Gastrocnemius medialis (tissue), 4 donors: ENCODE measurements at regions of chr12 and their contacts with region 1.

Region 1: GRCh38 chr12:102347811-102348210 is 132.6 kb downstream of the IGF1 start:
- DNase-seq: no peak
- ATAC-seq: no peak
- H3K4me3 ChIP-seq: peak overlapping the region in 1 of 4 donors; percentile 35
- H3K27ac ChIP-seq: peak overlapping the region in 3 of 4 donors; percentile 69 to 83 (median 80)
- H3K4me1 ChIP-seq: peaks cover 40 to 47% of the 10 kb centered on the region in 2 donors
- H3K27me3 ChIP-seq: no peaks in the 10 kb centered on the region
- CTCF ChIP-seq: no peak
- POLR2A ChIP-seq: no peak

Region 2: DNA sequence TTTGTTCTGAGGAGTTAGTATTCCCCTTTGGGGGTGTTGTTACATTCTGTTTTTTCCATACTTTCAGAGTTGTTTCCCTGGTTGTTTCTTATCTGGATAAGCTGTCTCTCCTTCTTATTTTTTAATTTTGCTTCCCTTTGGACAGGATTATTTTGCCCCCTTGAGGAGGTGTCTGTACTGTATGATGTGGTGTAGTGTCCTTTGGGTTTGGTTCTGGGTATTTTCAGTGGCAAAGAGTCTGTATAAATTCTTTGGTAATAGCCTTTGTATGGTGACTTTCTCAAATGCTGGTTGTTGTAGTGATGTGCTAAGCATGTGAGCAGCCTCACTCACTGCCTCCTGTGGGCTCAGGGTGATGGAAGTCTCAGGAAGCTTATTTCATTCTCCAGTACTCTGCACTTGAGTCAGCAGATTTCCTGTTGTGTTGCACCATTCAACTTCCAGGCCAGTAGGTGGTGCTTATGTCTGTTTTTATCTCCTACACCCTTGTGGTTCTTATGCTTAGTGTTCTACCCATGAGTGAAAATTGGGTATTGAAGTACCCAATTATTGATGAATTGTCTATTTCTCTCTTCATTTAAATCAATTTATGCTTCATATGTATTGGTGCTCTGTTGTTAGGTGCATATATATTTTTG is 46.9 kb before region 1 on chr12:
- in situ Hi-C with region 1: no loop called
- intact Hi-C with region 1: no loop called
- DNase-seq: no peak
- ATAC-seq: peak in 1 of 2 donors; percentile 61
- H3K4me3 ChIP-seq: peak overlapping the region in 1 of 4 donors; percentile 4
- H3K27ac ChIP-seq: no peak overlapping the region
- H3K4me1 ChIP-seq: no peaks in the 10 kb centered on the region
- H3K27me3 ChIP-seq: no peaks in the 10 kb centered on the region
- CTCF ChIP-seq: no peak
- POLR2A ChIP-seq: no peak

Region 3: GRCh38 chr12:102364709-102365108 is 16.9 kb after region 1 on chr12:
- in situ Hi-C with region 1: no loop called
- intact Hi-C with region 1: loop called (anchors 2 kb)
- DNase-seq: peak; percentile 17 to 46
- ATAC-seq: peak; percentile 91 to 94
- H3K4me3 ChIP-seq: no peak overlapping the region
- H3K27ac ChIP-seq: peak overlapping the region; percentile 15 to 73 (median 64)
- H3K4me1 ChIP-seq: peaks cover 13 to 19% of the 10 kb centered on the region in 2 donors
- H3K27me3 ChIP-seq: no peaks in the 10 kb centered on the region
- CTCF ChIP-seq: no peak
- POLR2A ChIP-seq: no peak

Region 4: DNA sequence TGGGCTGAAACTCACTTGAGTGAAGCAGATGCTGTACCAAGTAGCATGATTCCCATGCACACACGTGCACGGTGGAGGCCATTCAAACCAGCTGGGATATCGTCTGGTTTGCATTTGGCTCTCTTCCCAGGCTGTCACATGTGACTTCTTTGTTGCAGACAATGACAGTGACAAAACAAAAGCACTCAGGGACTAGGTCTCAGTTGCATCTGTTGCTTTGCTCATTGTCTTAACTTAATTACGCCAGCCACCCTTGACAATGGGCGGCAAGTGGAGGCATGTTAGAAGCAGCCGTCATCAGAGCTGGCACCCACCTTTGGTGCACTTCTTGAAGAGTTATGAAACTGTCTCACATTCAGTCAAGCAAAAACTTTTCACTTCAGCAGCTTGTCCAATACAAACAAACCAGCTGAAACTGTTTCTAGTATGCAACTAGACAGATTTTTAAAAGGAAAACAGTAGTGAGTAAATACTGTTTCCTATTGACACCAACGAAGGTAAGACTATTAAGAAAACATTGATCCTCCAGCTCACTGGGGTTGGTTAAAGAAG is 58.3 kb after region 1 on chr12:
- in situ Hi-C with region 1: no loop called
- intact Hi-C with region 1: loop called (anchors 5 kb)
- DNase-seq: peak; percentile 49 to 75
- ATAC-seq: peak; percentile 58 to 67
- H3K4me3 ChIP-seq: no peak overlapping the region
- H3K27ac ChIP-seq: peak overlapping the region in 3 of 4 donors; percentile 12 to 26 (median 13)
- H3K4me1 ChIP-seq: peaks cover 17 to 35% of the 10 kb centered on the region in 2 donors
- H3K27me3 ChIP-seq: no peaks in the 10 kb centered on the region
- CTCF ChIP-seq: no peak
- POLR2A ChIP-seq: no peak

Region 5: GRCh38 chr12:102427543-102427941 is 79.7 kb after region 1 on chr12:
- in situ Hi-C with region 1: no loop called
- intact Hi-C with region 1: loop called (anchors 1 kb)
- DNase-seq: peak; percentile 80 to 89
- ATAC-seq: peak; percentile 84 to 91
- H3K4me3 ChIP-seq: peak overlapping the region in 2 of 4 donors; percentile 10 to 12
- H3K27ac ChIP-seq: peak overlapping the region; percentile 84 to 93 (median 91)
- H3K4me1 ChIP-seq: peaks cover 36 to 39% of the 10 kb centered on the region in 2 donors
- H3K27me3 ChIP-seq: no peaks in the 10 kb centered on the region
- CTCF ChIP-seq: no peak
- POLR2A ChIP-seq: peak in 1 of 2 donors; percentile 31

Region 6: DNA sequence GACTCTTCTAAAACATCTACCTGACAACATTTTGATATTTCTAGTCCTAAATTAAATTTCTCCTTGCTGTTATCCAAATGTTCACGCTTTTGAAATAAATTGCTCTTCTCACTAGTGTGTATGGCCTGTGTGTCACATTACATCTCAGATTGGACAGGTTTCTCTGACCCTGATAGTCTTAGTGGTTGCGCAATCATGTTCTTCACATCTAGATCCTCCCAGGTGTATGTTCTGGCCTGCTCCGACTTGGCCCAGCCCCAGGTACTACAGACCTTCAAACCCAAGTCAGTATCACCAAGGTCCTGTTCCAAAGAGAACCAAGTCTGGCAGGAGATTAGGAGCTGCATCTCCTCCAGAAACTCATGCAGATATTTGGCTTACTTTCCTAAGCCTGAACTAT is 819.1 kb after region 1 on chr12:
- in situ Hi-C with region 1: no loop called
- intact Hi-C with region 1: no loop called
- DNase-seq: no peak
- ATAC-seq: no peak
- H3K4me3 ChIP-seq: no peak overlapping the region
- H3K27ac ChIP-seq: no peak overlapping the region
- H3K4me1 ChIP-seq: no peaks in the 10 kb centered on the region
- H3K27me3 ChIP-seq: no peaks in the 10 kb centered on the region
- CTCF ChIP-seq: no peak
- POLR2A ChIP-seq: no peak